Sciatic nerve (tissue), 2 donors: ENCODE measurements at regions of chr20 and their contacts with region 1.

Region 1: DNA sequence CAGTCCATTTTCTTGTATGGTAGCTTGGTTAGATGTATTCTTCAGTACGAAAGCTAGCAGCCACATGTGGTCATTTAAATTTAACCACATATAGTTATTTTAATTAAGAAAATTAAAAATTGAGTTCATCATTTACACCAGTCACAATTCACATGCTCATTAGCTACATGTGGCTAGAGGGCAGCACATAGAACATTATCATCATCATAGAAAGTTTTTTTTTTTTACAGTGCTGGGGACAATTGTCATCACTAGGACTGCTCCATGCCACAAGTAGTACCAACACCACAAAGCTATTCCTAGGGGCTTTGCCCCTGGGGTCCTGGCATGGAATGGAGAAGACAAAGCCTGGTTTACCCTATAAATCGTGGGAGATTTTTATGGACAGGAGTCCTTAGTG is 30.5 kb downstream of the PLCB4 start:
- DNase-seq: no peak
- ATAC-seq: no peak

Region 2: DNA sequence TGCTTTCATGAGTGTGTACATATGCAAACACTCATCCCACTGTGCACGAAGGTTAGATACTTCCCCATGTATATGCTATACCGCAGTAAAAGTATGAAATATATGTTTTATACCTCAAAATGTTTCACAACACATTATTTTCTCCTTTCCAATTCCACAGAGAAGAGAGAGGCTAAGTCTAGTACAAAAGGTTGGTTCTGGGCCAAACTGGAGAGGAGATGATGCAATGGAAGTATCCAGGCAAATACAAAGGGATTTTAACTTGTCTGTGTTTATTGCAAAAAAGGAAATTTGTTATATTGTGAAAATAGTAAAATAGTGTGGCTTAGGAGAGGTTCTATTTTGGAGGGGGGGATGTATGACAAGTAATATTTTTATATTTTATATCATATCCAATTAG is 854.7 kb before region 1 on chr20:
- intact Hi-C with region 1: loop called (anchors 5 kb)
- DNase-seq: no peak
- ATAC-seq: peak; percentile 88

Region 3: GRCh38 chr20:9500121-9500520 is 400.7 kb after region 1 on chr20:
- intact Hi-C with region 1: no loop called
- DNase-seq: no peak
- ATAC-seq: peak; percentile 46